ENCODE measurements at regions of chr11 and their contacts with region 1.

Region 1: DNA sequence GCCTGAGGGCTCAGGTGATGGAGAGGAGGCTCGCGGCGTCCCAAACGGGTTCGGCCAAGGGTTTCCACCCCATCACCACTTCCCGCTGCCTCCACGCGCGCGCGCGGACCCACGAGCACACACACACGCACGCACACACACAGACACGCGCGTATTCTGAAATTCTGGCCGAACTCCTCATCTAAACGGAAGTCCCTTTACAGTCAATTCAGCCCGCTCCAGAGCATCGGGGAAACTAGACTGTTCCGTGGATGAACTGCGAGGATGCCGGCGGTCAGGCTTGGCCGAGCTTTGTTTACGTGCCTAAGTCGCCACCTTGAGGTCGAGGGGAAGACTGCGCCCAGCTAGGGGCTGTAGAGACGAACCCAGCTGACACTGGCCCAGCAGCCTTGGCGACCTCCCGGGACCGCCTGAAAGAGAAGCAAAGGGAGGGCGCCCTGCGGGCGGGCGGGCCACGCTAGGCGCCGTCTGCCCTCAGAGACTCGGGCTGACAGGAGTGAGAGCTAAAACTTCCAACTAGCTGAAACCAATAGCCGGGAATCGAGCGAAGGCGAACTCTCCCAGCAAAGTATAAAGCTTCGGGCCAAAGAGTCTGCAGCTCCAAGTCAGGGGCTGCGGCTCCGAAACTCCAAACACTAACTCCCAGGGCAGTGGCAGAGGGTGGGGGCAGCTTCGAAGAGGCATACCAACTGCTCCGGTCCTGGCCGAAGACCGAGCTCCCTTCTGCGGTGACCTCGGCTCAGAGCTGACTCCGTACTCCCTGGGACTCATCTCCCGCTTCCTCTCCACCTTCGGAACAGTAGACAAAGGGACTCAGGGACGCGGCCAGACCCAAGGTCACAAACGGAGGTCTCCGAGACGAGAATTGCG is 124.7 kb upstream of the C11orf58 start:
- DNase-seq: peak; percentile 77 to 98 (median 88)

Region 2: DNA sequence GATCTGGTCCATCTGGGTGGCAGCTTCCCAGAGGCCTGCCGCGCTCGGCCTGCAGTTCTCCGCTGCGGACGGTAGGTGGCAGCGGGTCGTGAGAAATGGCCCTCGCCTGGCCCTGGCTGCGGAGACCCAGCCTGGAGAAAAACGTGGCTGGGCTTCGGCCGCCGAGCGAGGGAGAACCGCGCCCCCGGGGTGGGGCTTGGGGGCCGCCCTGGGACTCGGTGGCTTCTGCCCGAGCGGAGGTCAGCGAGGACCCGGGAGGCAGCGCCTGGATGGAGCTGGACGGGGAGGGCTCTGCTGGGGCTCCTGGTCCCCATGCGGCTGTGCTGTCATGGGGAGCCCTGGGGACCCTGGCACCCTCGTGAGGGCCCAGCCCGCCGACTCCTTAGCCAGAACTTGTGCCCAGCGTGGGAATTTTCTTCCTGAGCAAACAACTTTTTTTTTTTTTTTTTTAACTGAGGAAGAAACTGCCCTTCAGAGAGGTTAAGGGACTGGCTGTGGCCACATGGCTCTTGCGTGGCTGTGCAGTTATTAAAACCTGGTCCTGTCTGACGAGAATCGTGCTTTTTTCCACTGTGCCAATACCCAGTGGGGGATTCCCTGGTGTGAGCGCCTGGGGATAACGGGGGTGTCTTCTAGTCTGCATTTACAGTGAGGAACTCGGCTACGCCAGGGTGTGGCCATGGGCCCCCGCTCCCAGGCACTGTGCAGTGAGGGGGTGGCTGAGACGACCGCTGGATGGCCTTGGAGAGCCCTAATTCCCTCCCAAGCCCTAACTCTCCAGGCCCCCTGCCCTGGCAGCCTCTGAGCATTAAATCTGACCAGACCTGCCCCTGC is 963.4 kb before region 1 on chr11:
- intact Hi-C with region 1: loop called (anchors 1 kb)
- DNase-seq: peak; percentile 82 to 98 (median 90)

Region 3: DNA sequence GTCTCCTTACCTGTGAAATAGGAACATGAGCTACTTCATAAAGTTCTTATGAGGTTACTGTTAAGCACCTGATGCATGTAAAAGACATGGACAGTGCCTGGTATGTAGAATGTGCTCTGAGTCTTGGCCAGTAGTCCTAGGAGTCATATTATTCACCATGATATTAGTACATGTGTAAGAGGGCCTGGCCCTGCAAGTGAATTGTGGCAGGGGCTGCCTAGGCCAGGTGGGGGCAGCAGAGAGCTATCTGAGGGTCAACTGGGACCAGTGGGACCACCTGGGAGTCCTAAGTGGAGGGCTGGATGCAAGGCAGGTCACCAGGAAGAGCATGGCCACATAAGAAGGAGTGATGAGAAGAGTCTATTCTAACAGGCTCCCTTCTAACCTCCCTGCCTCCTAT is 786.9 kb before region 1 on chr11:
- intact Hi-C with region 1: loop called (anchors 5 kb)
- DNase-seq: peak in 9 of 10 donors; percentile 14 to 91 (median 63)

Region 4: GRCh38 chr11:15941201-15941770 is 672.5 kb before region 1 on chr11:
- intact Hi-C with region 1: loop called (anchors 1 kb)
- DNase-seq: peak in 3 of 10 donors; percentile 24 to 85 (median 80)

Region 5: DNA sequence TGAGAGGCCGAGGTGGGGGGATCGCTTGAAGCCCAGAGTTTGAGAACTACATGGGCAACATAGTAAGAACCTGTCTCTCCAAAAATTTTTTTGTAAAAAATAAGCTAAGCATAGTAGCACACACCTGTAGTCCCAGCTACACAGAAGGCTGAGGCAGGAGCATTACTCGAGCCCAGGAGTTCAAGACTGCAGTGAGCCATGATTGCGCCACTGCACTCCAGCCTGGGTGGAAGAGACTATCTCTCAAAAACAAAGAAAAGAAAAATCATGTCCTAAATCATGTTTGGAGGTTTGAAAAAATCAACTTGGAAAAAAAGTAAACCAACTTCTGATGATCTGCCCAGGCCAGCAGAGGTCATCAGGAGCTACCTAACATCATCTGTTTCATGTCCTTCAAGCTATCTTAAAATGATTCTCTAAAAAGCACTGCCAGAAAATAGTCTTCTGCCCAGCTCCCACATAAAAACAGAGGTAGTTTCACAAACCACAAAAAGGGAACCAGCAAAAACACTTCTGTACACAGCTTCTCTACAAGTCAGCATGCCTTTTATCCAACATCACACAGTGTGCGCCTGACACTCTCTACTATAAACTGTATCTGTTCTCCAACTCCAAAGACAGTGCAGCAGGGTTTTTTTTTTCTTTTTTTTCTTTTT is 422.4 kb before region 1 on chr11:
- intact Hi-C with region 1: loop called (anchors 5 kb)
- DNase-seq: no peak

Region 6: DNA sequence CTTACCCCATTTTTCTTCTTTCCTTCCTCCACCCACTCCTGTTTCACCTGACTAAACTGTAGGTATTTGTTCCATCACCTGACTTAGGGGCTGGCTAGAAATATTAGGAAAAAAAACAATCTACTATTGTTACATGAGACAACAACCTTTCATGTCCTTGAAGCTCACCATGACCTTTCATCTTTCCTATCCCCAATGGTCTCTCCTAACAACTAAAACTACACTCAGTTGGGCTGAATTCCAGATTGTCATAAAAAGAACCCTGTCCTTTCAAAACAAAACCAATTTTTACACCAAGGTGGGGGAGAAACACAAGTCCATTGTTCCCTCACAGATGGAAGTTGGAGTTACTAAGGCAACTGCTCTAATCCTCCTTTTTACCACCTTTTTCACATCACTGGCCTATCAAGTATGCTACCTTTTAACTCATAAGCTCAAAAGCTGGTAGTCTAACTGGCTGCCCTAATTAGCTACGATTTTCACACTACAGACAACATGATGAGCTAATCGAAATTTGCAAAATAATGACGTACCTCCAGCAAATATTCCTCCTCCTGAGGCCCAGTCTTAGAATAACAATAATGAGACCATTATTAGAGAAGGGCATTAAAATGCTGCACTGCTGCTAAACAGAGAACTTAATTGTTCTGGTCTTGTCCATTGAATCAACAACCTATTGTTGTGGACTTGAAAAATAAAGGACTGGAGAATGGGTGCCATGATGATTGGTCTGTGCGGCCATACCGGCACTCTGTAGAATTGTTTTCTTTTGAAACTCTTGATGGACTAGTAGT is 210.9 kb before region 1 on chr11:
- intact Hi-C with region 1: loop called (anchors 5 kb)
- DNase-seq: peak in 4 of 10 donors; percentile 18 to 63 (median 38)

Measured in posterior cingulate gyrus (tissue), 11 donors.